ENCODE measurements at regions of chr3 and their contacts with region 1.

Region 1: DNA sequence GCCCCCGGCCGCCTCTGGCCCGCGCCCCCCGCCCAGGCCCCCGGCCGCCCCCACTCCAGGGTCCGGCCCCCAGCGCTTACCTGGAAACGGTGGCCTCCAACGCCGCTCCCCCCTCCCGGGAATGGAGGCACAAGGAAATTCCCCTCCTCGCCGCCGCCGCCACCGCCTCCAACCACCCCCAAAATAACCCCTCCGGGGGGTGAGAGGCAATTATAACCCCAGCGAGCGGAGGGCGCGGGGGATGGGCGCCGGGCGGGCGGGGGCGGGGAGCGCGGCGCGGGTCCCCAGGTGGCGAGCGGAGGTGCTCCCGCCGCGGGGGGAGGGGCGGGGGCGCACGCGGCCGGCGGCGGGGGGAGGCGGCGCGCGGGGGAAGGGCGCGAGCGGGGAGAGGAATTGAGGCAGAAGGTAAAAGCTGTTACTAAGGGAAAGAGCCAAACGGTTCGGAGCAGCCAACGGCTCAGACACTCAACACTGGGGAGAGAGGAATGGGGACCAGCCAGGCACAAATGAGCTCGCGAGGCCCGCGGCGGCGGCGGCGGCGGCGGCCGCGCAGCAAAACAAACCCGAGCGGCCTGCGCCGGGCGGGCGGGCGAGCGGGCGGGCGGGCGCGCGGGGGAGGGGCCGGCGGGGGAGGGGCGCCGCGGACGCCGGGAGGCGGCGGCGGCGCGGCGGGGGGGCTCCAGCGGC is at the start of gene TBL1XR1:
- DNase-seq: peak; percentile 91
- ATAC-seq: peak; percentile 67
- H3K4me3 ChIP-seq: peak within 1 kb of the TSS; percentile 92
- H3K27ac ChIP-seq: peak within 1 kb of the TSS; percentile 87
- H3K4me1 ChIP-seq: peaks cover 31% of the 10 kb centered on the region
- H3K27me3 ChIP-seq: no peaks in the 10 kb centered on the region
- CTCF ChIP-seq: no peak
- total RNA-seq, gene TBL1XR1: 77.6 and 109 TPM in 2 replicates

Region 2: GRCh38 chr3:176692966-176693785 is 504.0 kb before region 1 on chr3:
- CTCF ChIA-PET with region 1: no interaction called
- POLR2A ChIA-PET with region 1: no interaction called
- intact Hi-C with region 1: no loop called
- DNase-seq: no peak
- ATAC-seq: no peak
- H3K4me3 ChIP-seq: no peak overlapping the region
- H3K27ac ChIP-seq: no peak overlapping the region
- H3K4me1 ChIP-seq: no peaks in the 10 kb centered on the region
- H3K27me3 ChIP-seq: no peaks in the 10 kb centered on the region
- CTCF ChIP-seq: no peak

Region 3: DNA sequence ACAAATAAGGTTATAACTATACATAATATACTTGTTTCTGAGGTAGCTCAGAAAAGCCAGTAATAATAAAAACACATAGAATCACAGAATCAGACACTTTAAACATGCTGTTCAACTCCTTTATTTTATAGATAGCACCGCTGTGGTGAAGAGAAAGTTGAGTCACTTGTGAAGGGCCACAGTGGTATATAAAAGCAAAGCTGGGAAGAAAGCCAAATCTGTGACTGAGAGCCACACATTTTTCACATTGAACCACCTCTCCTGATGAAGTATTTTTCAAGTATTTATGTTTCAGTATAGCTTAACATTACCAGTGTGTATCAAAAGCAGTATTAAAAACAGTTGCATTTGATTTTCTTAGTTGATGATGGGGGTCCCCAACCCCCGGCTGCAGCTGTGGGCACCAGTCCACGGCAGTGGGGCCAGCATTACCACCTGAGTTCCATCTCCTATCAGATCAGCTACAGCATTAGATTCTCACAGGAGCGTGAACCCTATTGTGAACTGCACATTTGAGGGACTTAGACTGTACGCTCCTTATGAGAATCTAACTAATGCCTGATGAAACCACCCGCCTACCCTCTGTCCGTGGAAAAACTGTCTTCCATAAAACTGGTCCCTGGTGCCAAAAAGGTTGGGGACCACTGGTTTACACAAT is 46.1 kb before region 1 on chr3:
- CTCF ChIA-PET with region 1: no interaction called
- POLR2A ChIA-PET with region 1: no interaction called
- intact Hi-C with region 1: loop called (anchors 2 kb)
- DNase-seq: peak; percentile 92
- ATAC-seq: peak; percentile 93
- H3K4me3 ChIP-seq: no peak overlapping the region
- H3K27ac ChIP-seq: peak overlapping the region; percentile 19
- H3K4me1 ChIP-seq: peaks cover 21% of the 10 kb centered on the region
- H3K27me3 ChIP-seq: no peaks in the 10 kb centered on the region
- CTCF ChIP-seq: no peak

Region 4: DNA sequence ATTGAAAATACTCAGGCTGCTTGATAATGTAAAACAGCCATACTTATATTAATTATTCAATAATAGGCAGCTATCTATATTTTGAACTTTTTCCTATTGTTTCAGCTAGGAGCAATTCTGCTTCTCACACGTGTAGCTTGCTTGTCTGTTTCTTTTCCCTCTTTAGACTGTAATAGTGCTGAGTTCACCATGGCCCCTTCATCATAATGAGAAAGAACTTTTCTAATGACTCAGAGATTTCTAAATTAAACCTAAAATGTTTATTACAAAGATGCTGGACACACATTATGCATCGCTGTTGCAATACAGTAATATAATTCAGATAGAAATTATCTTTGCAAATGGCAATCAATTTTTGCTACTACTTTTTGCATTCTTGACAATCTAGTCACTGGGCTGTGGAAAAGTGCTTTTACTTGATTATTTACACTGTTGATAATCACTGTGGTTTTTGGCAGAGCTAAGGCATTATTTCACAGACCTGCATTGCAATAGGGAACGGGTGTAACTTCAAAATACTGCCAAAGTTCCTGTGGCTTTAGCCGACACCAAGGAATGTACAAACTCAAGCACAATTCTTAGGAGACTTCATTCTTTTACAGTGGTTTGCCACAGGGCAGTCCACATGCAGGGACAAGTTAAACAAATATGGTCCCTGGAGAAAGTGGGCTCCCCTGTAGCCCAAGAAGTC is 281.1 kb after region 1 on chr3:
- CTCF ChIA-PET with region 1: no interaction called
- POLR2A ChIA-PET with region 1: no interaction called
- intact Hi-C with region 1: loop called (anchors 1 kb)
- DNase-seq: peak; percentile 98
- ATAC-seq: peak; percentile 92
- H3K4me3 ChIP-seq: peak overlapping the region; percentile 24; the same call in 1 of the 2 replicates
- H3K27ac ChIP-seq: peak overlapping the region; percentile 84
- H3K4me1 ChIP-seq: peaks cover 26% of the 10 kb centered on the region
- H3K27me3 ChIP-seq: no peaks in the 10 kb centered on the region
- CTCF ChIP-seq: no peak

Region 5: DNA sequence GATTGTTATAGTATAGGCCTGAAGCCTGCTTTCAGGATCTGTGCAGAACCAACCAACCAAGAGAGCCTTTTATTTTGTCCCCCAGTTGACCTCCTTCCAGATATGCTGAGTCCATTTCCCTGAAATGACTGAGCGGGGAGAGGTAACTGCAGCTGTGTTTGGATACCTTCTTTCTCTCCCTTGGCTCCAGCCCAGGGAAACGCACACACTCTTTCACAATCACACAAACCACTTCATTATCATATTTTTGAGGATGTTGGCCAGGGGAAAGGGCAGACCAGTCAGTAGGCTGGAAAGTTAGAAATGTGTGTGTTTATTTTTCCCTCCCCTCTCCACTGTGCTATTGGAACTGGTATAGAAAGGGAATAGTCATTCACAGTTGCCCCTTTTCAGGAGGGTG is 417.8 kb after region 1 on chr3:
- CTCF ChIA-PET with region 1: no interaction called
- POLR2A ChIA-PET with region 1: no interaction called
- intact Hi-C with region 1: loop called (anchors 5 kb)
- DNase-seq: peak; percentile 97
- ATAC-seq: peak; percentile 64
- H3K4me3 ChIP-seq: no peak overlapping the region
- H3K27ac ChIP-seq: peak overlapping the region; percentile 20; the same call in 1 of the 2 replicates
- H3K4me1 ChIP-seq: peaks cover 49% of the 10 kb centered on the region
- H3K27me3 ChIP-seq: no peaks in the 10 kb centered on the region
- CTCF ChIP-seq: no peak

Region 6: DNA sequence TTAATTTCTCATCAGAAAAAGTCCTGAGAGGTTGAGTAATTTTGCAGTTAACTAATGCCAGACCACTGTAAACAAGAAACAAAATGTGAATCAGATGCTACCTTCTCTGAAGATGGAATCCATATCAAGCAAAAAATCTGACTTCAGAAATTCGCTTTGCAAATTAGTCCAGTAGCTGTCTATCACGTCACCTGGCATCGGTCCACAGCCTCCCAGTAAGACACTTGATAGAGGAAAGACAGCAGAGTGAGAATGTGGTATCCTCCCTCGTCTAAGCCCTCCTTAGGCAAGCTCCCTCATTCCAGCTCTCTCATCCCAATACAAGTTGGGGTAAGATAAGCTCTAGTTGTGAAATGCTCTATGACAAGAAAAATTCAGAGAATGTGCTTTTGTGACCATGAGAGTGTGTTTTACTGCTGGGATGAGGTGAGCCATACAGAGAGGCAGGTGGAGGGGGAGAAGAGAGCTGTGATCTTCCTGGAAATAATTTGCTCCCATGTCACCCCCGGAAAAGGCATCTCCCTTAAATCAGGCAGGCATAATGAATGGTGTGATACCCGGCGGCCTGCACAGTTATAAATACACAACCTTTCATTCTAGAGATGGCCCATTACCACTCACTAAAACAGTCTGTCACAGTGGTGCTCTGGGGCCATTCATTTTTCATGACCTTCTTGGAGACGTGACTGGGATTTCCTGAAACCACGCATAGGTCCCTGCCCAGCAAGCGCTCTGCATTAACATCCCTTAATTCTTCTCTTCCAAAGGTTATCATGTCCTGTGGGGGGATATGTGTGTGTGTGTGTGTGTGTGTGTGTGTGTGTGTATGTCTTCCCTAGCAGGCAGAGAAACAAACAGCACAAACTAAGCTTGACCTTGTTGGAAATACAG is 737.1 kb after region 1 on chr3:
- CTCF ChIA-PET with region 1: no interaction called
- POLR2A ChIA-PET with region 1: no interaction called
- intact Hi-C with region 1: loop called (anchors 5 kb)
- DNase-seq: peak; percentile 21
- ATAC-seq: no peak
- H3K4me3 ChIP-seq: no peak overlapping the region
- H3K27ac ChIP-seq: no peak overlapping the region
- H3K4me1 ChIP-seq: peaks cover 53% of the 10 kb centered on the region
- H3K27me3 ChIP-seq: no peaks in the 10 kb centered on the region
- CTCF ChIP-seq: no peak

Measured in PC-3 (cell line).